ENCODE measurements at regions of chr4 and their contacts with region 1.

Region 1: DNA sequence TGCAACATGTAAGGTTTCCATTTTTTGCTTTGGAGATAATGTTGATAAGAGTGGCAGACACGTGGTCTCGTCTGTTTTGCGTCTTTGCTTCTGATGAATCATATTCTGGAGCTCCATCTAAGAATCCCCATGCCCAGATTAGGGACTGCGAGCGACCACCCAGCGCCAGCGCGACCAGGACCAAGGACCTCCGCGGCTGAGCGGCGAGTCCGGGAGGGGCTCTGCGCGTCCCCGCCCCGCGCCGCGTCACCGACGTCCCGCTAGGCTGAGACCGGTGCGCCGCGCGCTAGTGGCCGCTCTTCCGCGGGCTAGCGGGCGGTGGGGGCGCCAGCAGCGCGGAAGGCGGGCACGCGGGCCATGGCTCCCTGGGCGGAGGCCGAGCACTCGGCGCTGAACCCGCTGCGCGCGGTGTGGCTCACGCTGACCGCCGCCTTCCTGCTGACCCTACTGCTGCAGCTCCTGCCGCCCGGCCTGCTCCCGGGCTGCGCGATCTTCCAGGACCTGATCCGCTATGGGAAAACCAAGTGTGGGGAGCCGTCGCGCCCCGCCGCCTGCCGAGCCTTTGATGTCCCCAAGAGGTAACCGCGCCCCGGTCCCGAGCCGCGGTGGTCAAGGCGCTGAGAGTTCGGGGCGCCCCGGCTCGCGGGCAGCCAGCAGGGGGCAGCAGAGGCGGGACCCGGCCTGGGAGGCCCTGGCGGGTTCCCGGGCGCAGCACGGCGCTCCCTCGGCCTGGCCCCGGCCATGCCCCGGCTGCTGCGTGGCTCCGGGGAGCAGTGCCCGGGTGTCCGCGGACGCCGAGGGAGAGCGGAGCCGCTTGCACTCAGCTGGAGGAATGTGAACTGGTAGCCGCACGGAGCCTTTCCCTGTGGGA is at the start of gene SRD5A3:
- DNase-seq: peak; percentile 24
- H3K4me3 ChIP-seq: peak within 1 kb of the TSS; percentile 67 to 83 (median 80)
- H3K27ac ChIP-seq: peak within 1 kb of the TSS; percentile 93 to 97 (median 95)
- H3K4me1 ChIP-seq: peaks cover 14 to 39% (median 18%) of the 10 kb centered on the region in 3 donors
- H3K27me3 ChIP-seq: no peaks in the 10 kb centered on the region
- CTCF ChIP-seq: peak; percentile 87 to 98 (median 96)
- POLR2A ChIP-seq: peak in 2 of 4 donors; percentile 31 to 76
- total RNA-seq, gene SRD5A3: 9.9 to 28.1 (median 18.4) TPM

Region 2: DNA sequence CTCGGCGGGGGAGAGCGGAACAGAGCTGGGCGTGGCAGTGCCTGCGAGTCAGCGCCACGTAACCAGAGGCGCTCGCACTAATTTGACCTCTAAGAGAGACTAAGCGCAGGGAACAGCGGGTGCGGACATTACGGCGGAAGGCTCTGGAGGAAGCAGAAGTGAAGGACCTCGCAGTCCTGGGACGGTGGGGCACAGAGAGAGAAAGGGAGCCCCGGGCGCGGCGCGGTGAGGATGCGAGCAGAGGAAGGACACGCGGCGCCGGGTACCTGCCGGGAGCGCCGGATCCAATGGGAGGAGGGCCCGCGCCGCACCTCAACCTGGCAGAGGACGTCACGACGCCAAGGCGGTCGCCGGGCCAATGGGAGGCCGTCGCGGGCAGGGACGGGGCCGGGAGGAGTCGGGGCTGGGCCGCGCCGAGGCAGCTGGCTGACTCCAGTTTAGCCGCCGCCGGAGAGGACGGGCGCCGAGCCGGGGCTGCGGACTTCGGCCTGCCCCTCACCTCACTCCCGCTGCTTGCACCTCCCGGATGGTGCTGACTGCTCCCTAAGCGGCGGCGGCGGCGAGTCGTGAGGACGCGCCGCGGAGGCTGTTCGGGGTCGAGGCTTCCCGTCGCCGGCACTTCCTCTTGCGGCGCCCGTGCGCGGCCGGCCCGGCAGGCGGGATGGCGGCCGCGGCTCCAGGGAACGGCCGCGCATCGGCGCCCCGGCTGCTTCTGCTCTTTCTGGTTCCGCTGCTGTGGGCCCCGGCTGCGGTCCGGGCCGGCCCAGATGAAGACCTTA is 49.5 kb after region 1 on chr4 and contains the start of gene TMEM165:
- intact Hi-C with region 1: loop called (anchors 5 kb)
- DNase-seq: peak; percentile 71
- H3K4me3 ChIP-seq: peak within 1 kb of the TSS; percentile 75 to 99 (median 96)
- H3K27ac ChIP-seq: peak within 1 kb of the TSS; percentile 96 to 100 (median 100)
- H3K4me1 ChIP-seq: peaks cover 14 to 41% (median 18%) of the 10 kb centered on the region in 3 donors
- H3K27me3 ChIP-seq: no peaks in the 10 kb centered on the region
- CTCF ChIP-seq: peak in 1 of 6 experiments; percentile 3
- POLR2A ChIP-seq: peak in 3 of 4 donors; percentile 97 to 99 (median 98)
- total RNA-seq, gene TMEM165: 136 to 276 (median 179) TPM

Region 3: GRCh38 chr4:55444827-55445226 is 98.6 kb after region 1 on chr4:
- intact Hi-C with region 1: loop called (anchors 10 kb)
- DNase-seq: no peak
- H3K4me3 ChIP-seq: no peak overlapping the region
- H3K27ac ChIP-seq: no peak overlapping the region
- H3K4me1 ChIP-seq: peaks cover 0 to 5% (median 0%) of the 10 kb centered on the region in 3 donors
- H3K27me3 ChIP-seq: no peaks in the 10 kb centered on the region
- CTCF ChIP-seq: peak in 2 of 6 experiments; percentile 23 to 26
- POLR2A ChIP-seq: no peak

Region 4: DNA sequence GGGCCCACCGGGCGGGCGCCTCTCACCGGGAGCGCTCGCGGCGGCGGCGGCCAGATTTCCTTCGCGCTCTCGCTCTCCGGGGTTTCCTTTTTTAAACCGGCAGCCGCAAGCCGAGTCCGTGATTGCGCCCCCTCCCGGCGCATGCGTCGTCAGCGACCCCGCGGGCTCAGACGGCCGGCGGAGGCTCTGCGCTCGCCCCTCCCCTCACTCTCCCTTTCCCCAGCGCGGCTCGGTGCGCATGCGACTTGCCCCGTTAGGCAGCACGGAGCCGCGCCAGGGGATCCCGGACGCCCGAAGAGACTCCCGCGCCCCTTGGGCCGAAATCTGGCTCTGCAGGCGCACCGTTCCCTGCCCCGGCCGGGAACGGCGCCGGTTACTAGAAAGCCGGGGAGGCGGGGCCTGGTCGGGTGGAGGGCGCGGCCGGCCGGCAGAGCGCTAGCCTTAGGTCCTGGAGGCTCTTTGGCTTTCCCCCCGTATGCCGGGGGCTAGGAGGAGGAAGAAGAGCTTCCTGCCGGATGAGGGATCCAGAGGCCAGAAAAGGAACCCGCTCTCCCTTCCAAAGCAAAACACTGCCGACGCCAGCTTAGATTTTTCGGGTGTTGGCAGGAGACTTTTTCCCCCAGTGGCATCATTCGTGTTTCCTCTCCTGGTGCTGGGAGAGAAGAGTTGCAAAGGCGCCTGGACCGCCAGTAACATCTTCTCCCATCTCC is 200.7 kb after region 1 on chr4 and contains the start of gene CLOCK:
- intact Hi-C with region 1: loop called (anchors 5 kb)
- DNase-seq: peak; percentile 41
- H3K4me3 ChIP-seq: peak within 1 kb of the TSS; percentile 93 to 99 (median 95)
- H3K27ac ChIP-seq: peak within 1 kb of the TSS; percentile 99 to 100 (median 99)
- H3K4me1 ChIP-seq: peaks cover 8 to 57% (median 10%) of the 10 kb centered on the region in 3 donors
- H3K27me3 ChIP-seq: no peaks in the 10 kb centered on the region
- CTCF ChIP-seq: peak; percentile 15 to 71 (median 60)
- POLR2A ChIP-seq: peak in 3 of 4 donors; percentile 14 to 77 (median 39)
- total RNA-seq, gene CLOCK: 15.2 to 39.3 (median 32.6) TPM

Measured in esophagus squamous epithelium (tissue), 5 donors.